Dendritic cell treated with granulocyte-macrophage colony-stimulating factor and Interleukin-4, amounts not matched to agents 40 ng/mL and 50 ng/mL, for 4 days (primary cell): ENCODE measurements at regions of chr1 and their contacts with region 1.

Region 1: GRCh38 chr1:201877877-201878401 is 10.8 kb upstream of the SHISA4 start:
- H3K4me3 Mint-ChIP-seq: no peak overlapping the region
- H3K27ac Mint-ChIP-seq: no peak overlapping the region
- H3K4me1 Mint-ChIP-seq: peaks cover 21% of the 10 kb centered on the region
- H3K27me3 Mint-ChIP-seq: no peaks in the 10 kb centered on the region

Region 2: DNA sequence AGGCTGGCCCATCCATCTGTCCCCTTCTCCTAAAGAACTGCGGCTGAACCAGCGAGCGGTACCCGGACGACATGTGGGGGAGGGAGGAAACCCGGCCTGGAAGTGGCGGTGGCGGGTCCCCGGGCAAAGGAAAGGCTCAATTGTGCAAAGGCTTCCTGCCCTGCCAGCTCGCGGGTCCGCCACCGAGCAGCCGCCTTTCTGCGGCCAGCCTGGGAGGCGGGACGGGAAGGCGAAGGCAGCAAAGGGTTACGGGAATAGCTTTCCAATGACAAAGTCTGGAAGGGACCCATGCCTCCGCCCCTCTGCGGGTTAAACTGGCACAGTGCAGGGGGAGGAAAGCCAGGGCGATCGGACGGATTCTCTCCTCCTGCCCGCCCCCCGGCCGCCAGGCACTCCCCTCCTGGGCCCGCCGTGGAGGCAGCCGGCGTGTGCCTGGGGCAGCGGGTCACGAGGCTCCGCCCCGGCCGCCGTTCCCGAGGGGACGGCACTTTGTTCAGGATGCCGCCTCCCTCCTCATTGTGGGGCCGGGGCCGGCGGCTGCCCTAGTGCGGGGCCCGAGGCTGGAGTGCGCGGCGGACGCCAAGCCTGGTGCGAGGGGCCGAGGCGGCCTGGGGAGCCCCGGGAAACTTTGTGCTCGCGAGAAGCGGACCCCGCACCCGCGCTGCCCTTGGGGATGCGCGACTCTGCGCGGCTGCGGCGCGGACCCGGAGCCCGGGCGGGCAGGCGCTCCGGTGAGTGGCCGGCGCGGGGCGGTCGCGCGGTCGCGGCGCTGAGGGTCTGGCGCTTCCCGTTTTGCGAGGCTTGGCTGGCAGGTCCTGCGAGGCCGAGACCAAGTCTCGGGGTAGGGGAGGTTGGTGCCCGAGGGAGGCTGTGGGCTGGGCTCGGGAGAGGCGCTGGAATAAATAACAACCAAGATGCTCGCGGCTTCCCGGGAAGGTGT is 339.1 kb before region 1 on chr1 and contains the start of gene NAV1:
- intact Hi-C with region 1: loop called (anchors 5 kb)
- H3K4me3 Mint-ChIP-seq: peak within 1 kb of the TSS; percentile 66
- H3K27ac Mint-ChIP-seq: peak within 1 kb of the TSS; percentile 62
- H3K4me1 Mint-ChIP-seq: peaks cover 85% of the 10 kb centered on the region
- H3K27me3 Mint-ChIP-seq: peaks cover 23% of the 10 kb centered on the region

Region 3: GRCh38 chr1:201608635-201609395 is 269.1 kb before region 1 on chr1:
- intact Hi-C with region 1: no loop called
- H3K4me3 Mint-ChIP-seq: no peak overlapping the region
- H3K27ac Mint-ChIP-seq: no peak overlapping the region
- H3K4me1 Mint-ChIP-seq: peaks cover 11% of the 10 kb centered on the region
- H3K27me3 Mint-ChIP-seq: no peaks in the 10 kb centered on the region

Region 4: GRCh38 chr1:201709564-201710295 is 168.2 kb before region 1 on chr1:
- intact Hi-C with region 1: no loop called
- H3K4me3 Mint-ChIP-seq: no peak overlapping the region
- H3K27ac Mint-ChIP-seq: no peak overlapping the region
- H3K4me1 Mint-ChIP-seq: peaks cover 48% of the 10 kb centered on the region
- H3K27me3 Mint-ChIP-seq: peaks cover 2% of the 10 kb centered on the region

Region 5: GRCh38 chr1:201955009-201955728 is 77.2 kb after region 1 on chr1 and contains the start of gene TIMM17A:
- intact Hi-C with region 1: loop called (anchors 1 kb)
- H3K4me3 Mint-ChIP-seq: peak within 1 kb of the TSS; percentile 93
- H3K27ac Mint-ChIP-seq: peak within 1 kb of the TSS; percentile 100
- H3K4me1 Mint-ChIP-seq: peaks cover 12% of the 10 kb centered on the region
- H3K27me3 Mint-ChIP-seq: peaks cover under 1% of the 10 kb centered on the region

Region 6: DNA sequence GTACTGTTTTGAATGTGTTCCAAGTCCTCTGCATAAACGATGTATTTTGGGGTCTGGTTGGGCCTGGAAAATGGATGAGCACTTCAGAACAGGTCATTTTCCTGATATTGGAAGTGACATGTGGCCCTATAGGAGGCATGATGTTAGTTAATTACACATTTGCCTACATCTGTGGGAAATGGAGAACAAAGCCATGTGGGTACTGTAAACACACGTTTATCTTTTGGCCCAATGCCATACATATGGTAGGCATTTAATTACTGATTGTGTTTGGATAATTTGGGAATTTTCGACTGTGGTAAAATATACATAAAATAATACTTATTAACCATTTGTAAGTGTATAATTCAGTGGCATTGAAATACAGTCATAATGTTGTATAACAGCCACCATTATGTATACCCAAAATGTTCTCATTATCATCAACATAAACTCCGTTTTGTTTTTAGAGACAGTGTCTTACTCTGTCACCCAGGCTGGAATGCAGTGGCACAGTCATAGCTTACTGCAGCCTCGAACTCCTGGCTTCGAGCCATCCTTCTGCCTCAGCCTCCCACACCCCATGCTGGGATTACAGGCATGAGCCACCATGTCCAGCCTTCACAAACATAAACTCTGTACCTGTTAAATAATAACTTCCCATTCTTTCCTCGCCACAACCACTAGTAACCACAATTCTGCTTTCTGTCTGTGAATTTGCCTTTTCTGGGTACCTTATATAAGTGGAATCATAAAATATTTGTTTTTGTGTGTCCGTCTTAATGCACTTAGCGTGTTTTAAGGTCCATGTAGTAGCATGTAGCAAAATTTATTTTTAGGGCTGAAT is 92.6 kb after region 1 on chr1:
- intact Hi-C with region 1: loop called (anchors 1 kb)
- H3K4me3 Mint-ChIP-seq: no peak overlapping the region
- H3K27ac Mint-ChIP-seq: no peak overlapping the region
- H3K4me1 Mint-ChIP-seq: no peaks in the 10 kb centered on the region
- H3K27me3 Mint-ChIP-seq: peaks cover 2% of the 10 kb centered on the region